Testis (tissue), 5 donors: ENCODE measurements at regions of chr14 and their contacts with region 1.

Region 1: GRCh38 chr14:64636208-64636979 is 67.8 kb upstream of the PLEKHG3 start:
- DNase-seq: peak; percentile 78
- H3K4me3 ChIP-seq: peak overlapping the region in 1 of 2 donors; percentile 26
- H3K27ac ChIP-seq: no peak overlapping the region
- H3K4me1 ChIP-seq: peaks cover 5% of the 10 kb centered on the region
- H3K27me3 ChIP-seq: no peaks in the 10 kb centered on the region
- CTCF ChIP-seq: peak; percentile 79 to 92 (median 79)
- POLR2A ChIP-seq: no peak

Region 2: DNA sequence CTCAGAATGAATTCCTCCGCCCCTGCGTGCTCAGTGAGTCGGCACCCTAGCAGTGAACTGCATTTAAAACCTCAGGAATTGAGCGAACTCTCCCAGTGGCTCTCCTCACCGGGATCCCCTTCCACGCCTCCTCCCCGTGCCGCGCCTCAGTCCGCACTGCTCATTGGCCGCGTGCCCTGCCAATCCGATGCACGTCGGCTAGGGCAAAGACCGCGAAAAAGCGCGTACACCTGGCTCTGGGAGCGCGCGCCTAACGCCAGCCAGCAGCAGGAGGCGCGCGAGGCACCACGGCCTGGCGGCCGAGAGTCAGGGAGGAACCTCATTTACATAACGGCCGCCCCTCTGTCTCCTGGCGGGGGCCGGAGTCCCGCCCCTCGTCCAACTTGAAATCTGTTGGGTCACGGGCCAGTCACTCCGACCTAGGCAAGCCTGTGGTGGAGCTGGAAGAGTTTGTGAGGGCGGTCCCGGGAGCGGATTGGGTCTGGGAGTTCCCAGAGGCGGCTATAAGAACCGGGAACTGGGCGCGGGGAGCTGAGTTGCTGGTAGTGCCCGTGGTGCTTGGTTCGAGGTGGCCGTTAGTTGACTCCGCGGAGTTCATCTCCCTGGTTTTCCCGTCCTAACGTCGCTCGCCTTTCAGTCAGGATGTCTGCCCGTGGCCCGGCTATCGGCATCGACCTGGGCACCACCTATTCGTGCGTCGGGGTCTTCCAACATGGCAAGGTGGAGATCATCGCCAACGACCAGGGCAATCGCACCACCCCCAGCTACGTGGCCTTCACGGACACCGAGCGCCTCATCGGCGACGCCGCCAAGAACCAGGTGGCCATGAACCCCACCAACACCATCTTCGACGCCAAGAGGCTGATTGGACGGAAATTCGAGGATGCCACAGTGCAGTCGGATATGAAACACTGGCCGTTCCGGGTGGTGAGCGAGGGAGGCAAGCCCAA is 95.9 kb before region 1 on chr14 and contains the start of gene HSPA2:
- intact Hi-C with region 1: loop called (anchors 10 kb)
- DNase-seq: peak; percentile 99
- H3K4me3 ChIP-seq: peak within 1 kb of the TSS; percentile 58 to 68
- H3K27ac ChIP-seq: peak within 1 kb of the TSS; percentile 73 to 85
- H3K4me1 ChIP-seq: no peaks in the 10 kb centered on the region
- H3K27me3 ChIP-seq: no peaks in the 10 kb centered on the region
- CTCF ChIP-seq: peak; percentile 63 to 84 (median 65)
- POLR2A ChIP-seq: peak; percentile 82
- total RNA-seq, gene HSPA2: 134 to 160 TPM